ENCODE measurements at regions of chr20 and their contacts with region 1.

Region 1: DNA sequence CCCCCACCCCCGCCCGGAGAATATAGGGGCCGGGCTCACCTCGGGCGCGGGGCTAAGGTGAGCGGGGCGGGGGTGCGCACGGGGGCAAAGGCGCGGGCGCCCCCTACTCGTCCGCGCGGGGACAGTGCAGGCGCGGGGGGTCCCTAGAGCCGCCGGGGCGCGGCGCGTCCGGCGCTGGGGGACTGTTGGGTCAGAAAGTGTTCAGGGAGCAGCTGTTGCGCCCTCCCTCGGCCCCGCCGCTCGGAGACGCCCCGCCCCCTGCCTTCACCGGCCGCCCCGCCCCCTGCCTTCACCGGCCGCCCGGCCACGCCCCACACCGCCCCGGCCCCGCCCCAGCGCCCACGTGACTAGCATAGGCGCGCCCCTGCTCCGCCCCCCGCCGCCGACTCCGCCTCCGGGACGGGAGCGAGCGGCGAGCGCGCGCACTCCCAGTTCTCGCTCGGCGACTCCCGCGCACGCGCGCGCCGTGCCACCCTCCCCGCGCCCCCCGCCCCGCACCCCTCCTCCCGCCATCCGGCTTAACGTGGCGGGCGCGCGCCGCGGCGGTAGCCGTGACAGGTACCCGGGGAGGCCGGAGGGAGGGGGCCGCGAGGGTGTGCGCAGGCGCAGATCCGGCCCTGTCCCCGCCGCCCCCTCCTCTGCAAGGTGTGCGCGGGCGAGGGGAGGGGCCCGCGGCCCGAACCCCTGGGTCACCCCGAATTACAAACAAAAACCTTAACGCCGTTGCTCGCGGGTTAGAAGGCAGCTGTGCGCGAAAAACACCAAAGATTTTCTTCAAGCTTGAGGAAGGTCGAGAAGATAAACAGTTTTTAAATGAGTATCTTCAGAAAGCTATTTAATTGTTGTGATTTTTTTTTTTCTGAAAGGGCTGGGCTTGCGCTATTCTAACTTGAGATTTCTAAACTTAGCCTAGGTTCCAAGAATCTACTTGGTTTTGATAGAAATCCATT is 704 bp upstream of the ZNF217 start:
- DNase-seq: peak; percentile 98
- ATAC-seq: peak; percentile 69
- H3K4me3 ChIP-seq: peak overlapping the region; percentile 88
- H3K27ac ChIP-seq: peak overlapping the region; percentile 65
- H3K4me1 ChIP-seq: peaks cover 41% of the 10 kb centered on the region
- H3K27me3 ChIP-seq: no peaks in the 10 kb centered on the region
- CTCF ChIP-seq: no peak

Region 2: GRCh38 chr20:53539516-53539915 is 54.8 kb before region 1 on chr20:
- CTCF ChIA-PET with region 1: no interaction called
- POLR2A ChIA-PET with region 1: no interaction called
- intact Hi-C with region 1: no loop called
- DNase-seq: no peak
- ATAC-seq: no peak
- H3K4me3 ChIP-seq: no peak overlapping the region
- H3K27ac ChIP-seq: no peak overlapping the region
- H3K4me1 ChIP-seq: no peaks in the 10 kb centered on the region
- H3K27me3 ChIP-seq: no peaks in the 10 kb centered on the region
- CTCF ChIP-seq: no peak

Region 3: GRCh38 chr20:53578492-53579222 is 15.7 kb before region 1 on chr20:
- CTCF ChIA-PET with region 1: interaction called, 5 read pairs
- POLR2A ChIA-PET with region 1: interaction called, 15 read pairs
- intact Hi-C with region 1: loop called (anchors 1 kb)
- DNase-seq: peak; percentile 100
- ATAC-seq: peak; percentile 12
- H3K4me3 ChIP-seq: peak overlapping the region; percentile 75
- H3K27ac ChIP-seq: peak overlapping the region; percentile 88
- H3K4me1 ChIP-seq: peaks cover 59% of the 10 kb centered on the region
- H3K27me3 ChIP-seq: no peaks in the 10 kb centered on the region
- CTCF ChIP-seq: peak; percentile 99

Region 4: GRCh38 chr20:53609491-53610445 is 15.4 kb after region 1 on chr20:
- CTCF ChIA-PET with region 1: no interaction called
- POLR2A ChIA-PET with region 1: interaction called, 22 read pairs
- intact Hi-C with region 1: no loop called
- DNase-seq: peak; percentile 93
- ATAC-seq: peak; percentile 85
- H3K4me3 ChIP-seq: peak overlapping the region; percentile 25
- H3K27ac ChIP-seq: peak overlapping the region; percentile 74
- H3K4me1 ChIP-seq: peaks cover 52% of the 10 kb centered on the region
- H3K27me3 ChIP-seq: no peaks in the 10 kb centered on the region
- CTCF ChIP-seq: no peak

Region 5: DNA sequence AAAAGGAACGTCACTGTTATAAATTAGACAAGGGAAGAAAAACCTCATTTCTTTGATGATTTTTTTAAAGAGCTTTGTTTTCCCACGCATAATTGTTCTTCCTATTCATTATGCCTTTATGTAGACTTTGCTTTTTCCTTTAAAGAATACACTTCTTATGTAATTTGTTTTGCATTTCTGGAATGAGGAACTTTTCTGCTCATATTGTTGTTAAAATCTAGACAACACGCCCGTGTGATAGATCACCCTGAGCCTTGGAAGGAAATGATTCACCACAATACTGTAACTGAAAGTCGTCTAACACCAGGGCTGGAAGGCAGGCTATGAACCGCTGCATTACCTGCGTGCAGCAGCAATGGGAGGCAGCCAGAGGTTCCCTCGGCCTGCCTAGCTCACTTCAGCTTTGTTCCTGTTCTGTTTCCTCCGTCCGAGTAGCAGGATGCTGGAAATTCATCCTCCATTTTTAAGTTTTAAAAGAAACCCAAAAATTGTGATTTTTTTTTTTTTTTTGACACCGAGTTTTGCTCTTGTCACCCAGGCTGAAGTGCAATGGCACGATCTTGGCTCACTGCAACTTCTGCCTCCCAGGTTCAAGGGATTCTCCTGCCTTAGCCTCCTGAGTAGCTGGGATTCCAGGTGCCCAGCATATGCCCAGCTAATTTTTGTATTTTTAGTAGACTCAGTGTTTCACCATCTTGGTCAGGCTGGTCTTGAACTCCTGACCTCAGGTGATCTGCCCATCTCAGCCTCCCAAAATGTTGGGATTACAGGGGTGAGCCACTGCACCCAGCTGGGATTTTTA is 48.9 kb after region 1 on chr20:
- CTCF ChIA-PET with region 1: no interaction called
- POLR2A ChIA-PET with region 1: interaction called, 3 read pairs
- intact Hi-C with region 1: loop called (anchors 1 kb)
- DNase-seq: peak; percentile 94
- ATAC-seq: peak; percentile 92
- H3K4me3 ChIP-seq: peak overlapping the region; percentile 51
- H3K27ac ChIP-seq: peak overlapping the region; percentile 80
- H3K4me1 ChIP-seq: peaks cover 32% of the 10 kb centered on the region
- H3K27me3 ChIP-seq: no peaks in the 10 kb centered on the region
- CTCF ChIP-seq: no peak

Region 6: GRCh38 chr20:53718142-53719021 is 124.0 kb after region 1 on chr20:
- CTCF ChIA-PET with region 1: no interaction called
- POLR2A ChIA-PET with region 1: no interaction called
- intact Hi-C with region 1: no loop called
- DNase-seq: no peak
- ATAC-seq: no peak
- H3K4me3 ChIP-seq: no peak overlapping the region
- H3K27ac ChIP-seq: no peak overlapping the region
- H3K4me1 ChIP-seq: peaks cover 9% of the 10 kb centered on the region
- H3K27me3 ChIP-seq: no peaks in the 10 kb centered on the region
- CTCF ChIP-seq: no peak

Region 7: GRCh38 chr20:53748821-53749421 is 154.6 kb after region 1 on chr20:
- CTCF ChIA-PET with region 1: interaction called, 13 read pairs
- POLR2A ChIA-PET with region 1: interaction called, 6 read pairs
- intact Hi-C with region 1: no loop called
- DNase-seq: peak; percentile 58
- ATAC-seq: no peak
- H3K4me3 ChIP-seq: no peak overlapping the region
- H3K27ac ChIP-seq: peak overlapping the region; percentile 47
- H3K4me1 ChIP-seq: peaks cover 56% of the 10 kb centered on the region
- H3K27me3 ChIP-seq: no peaks in the 10 kb centered on the region
- CTCF ChIP-seq: no peak

Region 8: DNA sequence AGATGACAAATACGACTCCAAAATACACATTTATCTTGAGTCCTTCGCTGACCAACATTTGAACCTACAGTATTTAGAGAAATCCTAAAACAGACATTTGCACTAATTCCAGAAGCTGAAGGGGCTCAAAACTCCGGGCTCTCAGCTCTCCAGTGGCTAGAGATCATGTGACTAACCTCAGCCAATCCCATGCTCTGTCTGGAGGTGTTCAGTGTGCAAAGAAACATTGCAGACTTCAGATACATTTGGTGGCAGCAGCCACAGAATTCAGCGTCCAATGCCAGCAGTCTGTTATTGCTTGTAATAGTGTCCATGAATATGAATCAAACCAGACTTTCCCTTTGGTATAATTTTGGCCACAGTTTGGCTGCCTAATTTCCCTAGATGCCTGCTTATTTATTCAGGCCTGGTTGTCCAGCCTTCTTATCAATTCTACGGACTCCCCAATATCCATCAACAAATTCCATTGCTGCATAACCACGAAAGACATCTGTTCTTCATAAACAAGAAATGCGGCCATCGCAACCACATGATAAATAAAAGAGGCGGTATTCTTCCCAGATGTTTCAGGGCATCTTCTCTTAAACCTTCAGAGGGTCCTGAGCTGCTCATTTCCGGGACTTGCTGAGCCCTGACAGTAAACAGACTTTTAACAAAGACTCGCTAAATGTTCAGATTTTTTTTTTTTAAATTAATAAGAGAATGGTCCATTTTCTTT is 593.9 kb after region 1 on chr20:
- CTCF ChIA-PET with region 1: no interaction called
- POLR2A ChIA-PET with region 1: no interaction called
- intact Hi-C with region 1: no loop called
- DNase-seq: no peak
- ATAC-seq: no peak
- H3K4me3 ChIP-seq: no peak overlapping the region
- H3K27ac ChIP-seq: no peak overlapping the region
- H3K4me1 ChIP-seq: 0 out of 2 replicates have a peak, but pooled peaks cover 8% of the 10 kb centered on the region
- H3K27me3 ChIP-seq: peaks cover 7% of the 10 kb centered on the region; the same call in 1 of the 2 replicates
- CTCF ChIP-seq: no peak